Activated CD8-positive, alpha-beta memory T cell treated with anti-CD3 and anti-CD28 coated beads, Interleukin-2, amount 10 ng/mL, durations not matched to agents 7 days and 5 days (primary cell): ENCODE measurements at regions of chr1 and their contacts with region 1.

Region 1: DNA sequence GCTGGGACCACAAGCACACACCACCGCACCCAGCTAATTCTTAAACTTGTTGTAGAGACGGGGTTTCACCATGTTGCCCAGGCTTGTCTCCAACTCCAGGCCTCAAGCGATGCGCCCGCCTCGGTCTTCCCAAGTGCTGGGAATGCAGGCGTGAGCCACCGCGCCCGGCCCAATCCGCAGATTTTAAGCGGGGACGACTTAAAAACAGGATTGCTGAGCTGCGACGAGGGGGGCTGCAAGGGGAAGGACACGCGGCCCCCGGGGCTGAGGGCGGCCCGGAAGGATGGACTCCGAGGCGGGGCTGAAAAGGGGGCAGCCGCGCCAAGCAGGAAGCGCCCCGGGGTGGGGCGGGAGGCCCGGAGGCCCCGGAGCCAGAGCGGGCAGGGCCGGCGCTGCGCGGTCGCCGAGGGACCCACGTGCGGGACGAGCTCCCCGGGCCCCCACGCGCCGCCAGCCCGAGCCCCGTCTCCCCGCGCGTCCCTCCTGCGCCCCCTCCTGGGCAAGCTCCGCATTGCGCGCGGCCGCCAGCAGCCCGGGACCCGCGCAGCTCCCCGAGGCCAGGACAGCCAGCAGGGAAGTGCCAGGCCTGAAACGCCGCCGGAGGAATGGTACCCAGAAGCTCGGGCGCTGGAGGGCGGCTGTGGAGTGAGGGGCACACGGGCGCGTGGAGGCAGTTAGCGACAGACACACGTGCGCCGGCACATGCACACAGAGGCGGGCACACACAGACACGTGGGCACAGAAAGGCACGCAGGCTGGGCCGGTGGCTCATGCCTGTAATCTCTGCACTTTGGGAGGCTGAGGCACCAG is 5.5 kb upstream of the PRKCZ start:
- DNase-seq: peak; percentile 77
- ATAC-seq: peak; percentile 84
- H3K4me3 Mint-ChIP-seq: peak overlapping the region; percentile 30
- H3K27ac Mint-ChIP-seq: no peak overlapping the region
- H3K4me1 Mint-ChIP-seq: peaks cover 16% of the 10 kb centered on the region
- H3K27me3 Mint-ChIP-seq: peaks cover 16% of the 10 kb centered on the region

Region 2: DNA sequence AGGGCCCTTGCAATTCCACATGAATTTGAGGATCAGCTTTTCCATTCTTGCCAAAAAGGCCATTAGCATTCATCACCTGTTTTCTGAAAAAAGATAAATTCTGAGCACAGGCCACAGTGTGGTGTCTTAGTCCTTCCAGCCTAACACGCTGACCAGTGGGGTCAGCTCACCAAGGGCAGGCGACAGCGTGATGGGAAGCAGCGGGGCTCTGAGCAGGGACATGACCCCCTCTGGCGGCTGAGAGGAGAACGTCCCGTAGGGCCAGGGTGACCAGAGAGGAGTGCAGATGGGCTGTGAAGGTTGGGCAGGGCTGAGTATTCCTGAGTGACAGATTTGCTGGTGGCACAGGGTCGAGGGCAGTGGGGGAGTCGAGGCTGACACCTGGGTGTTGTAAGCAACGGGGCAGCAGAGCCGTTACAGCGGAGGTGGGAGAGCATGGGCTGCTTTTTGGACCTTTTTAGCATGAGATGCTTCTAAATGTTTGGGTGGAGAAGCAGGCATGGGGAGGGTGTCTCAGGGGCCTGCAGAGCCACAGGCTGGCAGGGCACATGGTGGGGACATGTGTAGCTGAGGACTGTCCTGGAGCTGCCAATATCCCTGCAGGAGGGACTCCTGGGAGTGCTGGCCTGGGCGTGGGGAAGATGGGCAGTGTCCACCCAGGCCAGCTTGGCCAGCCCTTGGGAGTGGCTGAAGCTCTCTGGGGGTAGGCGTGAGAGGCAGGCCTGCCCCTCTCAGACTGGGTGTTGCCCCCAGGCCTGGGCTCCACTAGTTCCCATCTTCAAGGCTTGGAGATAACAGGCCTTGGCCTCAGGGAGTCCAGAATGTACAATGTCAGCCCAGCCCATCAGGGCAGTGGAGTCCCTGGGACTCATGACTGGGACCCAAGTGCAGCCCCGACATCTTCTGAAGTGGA is 138.3 kb before region 1 on chr1:
- CTCF ChIA-PET with region 1: interaction called, 14 read pairs
- DNase-seq: peak; percentile 82
- ATAC-seq: peak; percentile 50
- H3K4me3 Mint-ChIP-seq: no peak overlapping the region
- H3K27ac Mint-ChIP-seq: peak overlapping the region; percentile 21
- H3K4me1 Mint-ChIP-seq: peaks cover 15% of the 10 kb centered on the region
- H3K27me3 Mint-ChIP-seq: no peaks in the 10 kb centered on the region

Region 3: GRCh38 chr1:1959840-1960479 is 84.8 kb before region 1 on chr1:
- CTCF ChIA-PET with region 1: interaction called, 84 read pairs
- DNase-seq: peak; percentile 78
- ATAC-seq: peak; percentile 83
- H3K4me3 Mint-ChIP-seq: no peak overlapping the region
- H3K27ac Mint-ChIP-seq: no peak overlapping the region
- H3K4me1 Mint-ChIP-seq: peaks cover 2% of the 10 kb centered on the region
- H3K27me3 Mint-ChIP-seq: peaks cover 12% of the 10 kb centered on the region

Region 4: DNA sequence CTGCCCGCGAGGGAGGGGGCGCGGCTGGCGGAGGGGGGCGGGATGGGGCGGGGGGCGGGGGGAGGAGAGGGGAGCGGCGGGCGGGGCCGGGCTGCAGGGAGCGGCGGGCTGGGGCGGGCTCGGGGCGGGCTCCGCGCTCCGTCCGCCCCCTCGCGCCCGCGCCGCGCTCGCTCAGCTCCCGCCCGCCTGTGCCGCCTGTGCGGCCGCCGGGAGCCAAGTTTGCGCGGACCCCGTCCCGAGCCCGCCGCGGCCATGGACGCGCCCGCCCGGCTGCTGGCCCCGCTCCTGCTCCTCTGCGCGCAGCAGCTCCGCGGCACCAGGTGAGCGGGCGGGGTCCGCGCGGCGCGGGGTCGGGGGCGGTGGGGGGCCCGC is 25.6 kb before region 1 on chr1 and contains the start of gene GABRD:
- CTCF ChIA-PET with region 1: interaction called, 18 read pairs
- DNase-seq: no peak
- ATAC-seq: peak; percentile 55
- H3K4me3 Mint-ChIP-seq: no peak within 1 kb of the TSS
- H3K27ac Mint-ChIP-seq: no peak within 1 kb of the TSS
- H3K4me1 Mint-ChIP-seq: peaks cover 2% of the 10 kb centered on the region
- H3K27me3 Mint-ChIP-seq: peaks cover 50% of the 10 kb centered on the region
- total RNA-seq, gene GABRD: not detected

Region 5: DNA sequence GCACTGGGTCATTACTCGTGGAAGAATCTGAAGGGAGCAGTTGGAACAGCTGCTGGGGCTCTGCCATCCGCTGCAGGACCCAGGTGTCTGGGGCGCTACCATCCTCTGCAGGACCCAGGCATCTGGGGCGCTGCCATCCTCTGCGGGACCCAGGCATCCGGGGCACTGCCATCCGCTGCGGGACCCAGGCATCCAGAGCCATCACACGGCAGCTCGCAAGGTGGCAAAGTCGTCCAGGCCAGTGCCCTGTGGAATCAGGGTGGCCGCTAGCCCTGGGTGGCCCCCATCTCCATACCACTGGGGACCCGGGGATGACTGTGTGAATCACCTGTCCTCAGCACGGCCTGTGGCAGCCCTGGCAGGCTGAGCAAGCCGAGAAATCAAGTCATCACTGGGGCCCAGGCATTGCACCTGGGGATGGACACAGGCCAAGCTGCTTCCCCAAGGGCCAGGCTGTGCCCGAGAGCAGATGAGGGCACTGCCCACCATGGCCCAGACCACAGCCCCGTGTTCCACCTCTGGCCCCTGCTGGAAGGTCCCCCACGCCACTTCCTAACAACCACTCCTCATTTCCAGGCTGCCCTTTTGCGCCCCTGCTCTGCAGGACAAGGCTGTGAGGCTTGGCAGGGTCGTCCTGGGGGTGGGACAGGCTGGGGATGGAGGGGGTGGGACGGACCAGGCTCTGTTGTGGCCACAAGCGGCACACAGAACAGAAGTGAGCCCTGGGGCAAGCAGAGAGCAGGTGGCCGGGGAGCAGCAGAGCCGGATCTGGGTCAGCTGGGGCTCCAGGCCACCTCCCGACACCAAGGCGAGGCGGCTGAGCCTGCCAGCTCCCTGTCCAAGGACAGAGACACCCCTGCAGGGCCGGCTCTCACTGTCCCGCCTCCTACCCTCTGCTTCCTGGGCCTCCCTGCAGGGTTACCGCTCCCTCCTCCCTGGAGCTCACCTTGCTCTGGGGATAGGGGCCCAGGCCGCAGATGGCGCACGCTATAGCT is 12.9 kb before region 1 on chr1:
- CTCF ChIA-PET with region 1: interaction called, 14 read pairs
- DNase-seq: no peak
- ATAC-seq: no peak
- H3K4me3 Mint-ChIP-seq: no peak overlapping the region
- H3K27ac Mint-ChIP-seq: no peak overlapping the region
- H3K4me1 Mint-ChIP-seq: no peaks in the 10 kb centered on the region
- H3K27me3 Mint-ChIP-seq: no peaks in the 10 kb centered on the region

Region 6: DNA sequence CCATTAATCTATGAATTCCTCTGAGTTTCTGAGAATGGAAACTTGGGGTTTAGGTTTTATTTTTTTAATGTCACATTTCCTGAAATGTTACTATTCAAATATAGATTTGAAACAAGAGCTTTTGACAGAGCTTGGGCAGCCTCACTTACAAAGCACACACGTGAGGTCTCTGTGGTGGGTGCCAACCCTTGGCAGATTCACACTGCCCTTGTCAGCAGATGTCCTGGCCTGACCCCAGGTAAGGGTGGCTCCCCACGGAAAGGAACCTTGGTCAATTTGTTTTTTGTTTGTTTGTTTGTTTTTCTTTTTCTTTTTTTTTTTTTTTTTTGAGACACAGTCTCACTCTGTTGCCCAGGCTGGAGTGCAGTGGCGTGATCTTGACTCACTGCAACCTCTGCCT is 96.3 kb after region 1 on chr1:
- CTCF ChIA-PET with region 1: interaction called, 14 read pairs
- DNase-seq: no peak
- ATAC-seq: no peak
- H3K4me3 Mint-ChIP-seq: no peak overlapping the region
- H3K27ac Mint-ChIP-seq: no peak overlapping the region
- H3K4me1 Mint-ChIP-seq: peaks cover 6% of the 10 kb centered on the region
- H3K27me3 Mint-ChIP-seq: no peaks in the 10 kb centered on the region